ENCODE measurements at regions of chr4 and their contacts with region 1.

Region 1: GRCh38 chr4:89640620-89641366 is 196.2 kb downstream of the SNCA start:
- DNase-seq: peak; percentile 68
- ATAC-seq: peak; percentile 99
- H3K4me3 ChIP-seq: peak overlapping the region; percentile 9 to 23; a peak in 1 of 4 replicates
- H3K27ac ChIP-seq: no peak overlapping the region
- H3K4me1 ChIP-seq: peaks cover 6 to 10% of the 10 kb centered on the region in 2 experiments; a peak in 3 of 4 replicates
- H3K27me3 ChIP-seq: no peaks in the 10 kb centered on the region
- CTCF ChIP-seq: peak; percentile 49 to 85 (median 81); a peak in 5 of 6 replicates
- POLR2A ChIP-seq: no peak
- RAD21 ChIP-seq: peak; percentile 59

Region 2: GRCh38 chr4:89653012-89653411 is 12.2 kb after region 1 on chr4:
- CTCF ChIA-PET with region 1: interaction called, 14 read pairs
- POLR2A ChIA-PET with region 1: no interaction called
- RAD21 ChIA-PET with region 1: no interaction called
- intact Hi-C with region 1: no loop called
- DNase-seq: no peak
- ATAC-seq: no peak
- H3K4me3 ChIP-seq: no peak overlapping the region
- H3K27ac ChIP-seq: no peak overlapping the region
- H3K4me1 ChIP-seq: no peaks in the 10 kb centered on the region
- H3K27me3 ChIP-seq: no peaks in the 10 kb centered on the region
- CTCF ChIP-seq: no peak
- POLR2A ChIP-seq: no peak
- RAD21 ChIP-seq: no peak

Region 3: GRCh38 chr4:89657931-89658700 is 17.3 kb after region 1 on chr4:
- CTCF ChIA-PET with region 1: interaction called, 14 read pairs
- POLR2A ChIA-PET with region 1: no interaction called
- RAD21 ChIA-PET with region 1: no interaction called
- intact Hi-C with region 1: no loop called
- DNase-seq: peak; percentile 28
- ATAC-seq: peak; percentile 74
- H3K4me3 ChIP-seq: no peak overlapping the region
- H3K27ac ChIP-seq: no peak overlapping the region
- H3K4me1 ChIP-seq: peaks cover 4 to 10% of the 10 kb centered on the region in 2 experiments
- H3K27me3 ChIP-seq: no peaks in the 10 kb centered on the region
- CTCF ChIP-seq: peak; percentile 39 to 60 (median 44); a peak in 4 of 6 replicates
- POLR2A ChIP-seq: no peak
- RAD21 ChIP-seq: peak; percentile 63

Region 4: GRCh38 chr4:89868999-89869589 is 228.3 kb after region 1 on chr4:
- CTCF ChIA-PET with region 1: interaction called, 11 read pairs
- POLR2A ChIA-PET with region 1: no interaction called
- RAD21 ChIA-PET with region 1: interaction called in 1 of 2 experiments, 3 read pairs
- intact Hi-C with region 1: no loop called
- DNase-seq: no peak
- ATAC-seq: no peak
- H3K4me3 ChIP-seq: no peak overlapping the region
- H3K27ac ChIP-seq: no peak overlapping the region
- H3K4me1 ChIP-seq: no peaks in the 10 kb centered on the region
- H3K27me3 ChIP-seq: no peaks in the 10 kb centered on the region
- CTCF ChIP-seq: peak; percentile 34 to 50 (median 37); a peak in 5 of 6 replicates
- POLR2A ChIP-seq: no peak
- RAD21 ChIP-seq: peak; percentile 41; the same call in 1 of the 2 replicates

Region 5: DNA sequence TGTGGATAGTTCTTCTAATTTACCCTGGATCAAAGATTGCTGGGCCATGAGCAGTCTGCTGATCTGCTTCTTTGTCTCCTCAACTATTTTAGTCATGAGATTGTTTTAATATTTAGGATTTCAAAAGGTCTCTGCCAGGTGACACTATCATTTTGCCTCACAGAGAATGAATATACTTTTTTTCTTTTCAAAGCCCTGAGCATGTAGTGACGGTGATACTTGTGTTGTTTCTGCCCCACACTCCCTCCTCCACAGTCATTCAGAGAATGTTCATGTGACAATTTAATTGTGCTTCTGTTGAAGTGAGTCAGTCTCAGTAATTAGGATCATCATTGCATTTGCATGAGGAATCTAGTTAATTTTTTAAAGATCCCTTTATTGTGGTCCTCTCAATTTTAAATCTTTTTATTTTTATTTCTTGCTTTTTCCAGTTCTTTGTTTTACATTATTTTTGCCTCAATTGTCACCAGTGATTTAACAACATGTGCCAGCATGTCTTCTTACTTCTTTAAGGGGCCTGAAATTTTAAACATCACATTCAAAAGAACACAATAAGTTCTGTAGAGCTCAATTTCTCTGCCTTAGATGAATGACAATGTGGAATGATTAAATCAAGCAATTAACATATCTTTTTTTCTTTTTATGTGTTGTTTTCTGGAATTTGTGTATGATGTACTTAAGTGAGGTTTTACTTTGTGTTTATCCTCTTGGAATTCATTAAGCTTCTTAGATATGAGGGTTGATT is 266.2 kb after region 1 on chr4:
- CTCF ChIA-PET with region 1: interaction called, 4 read pairs
- POLR2A ChIA-PET with region 1: no interaction called
- RAD21 ChIA-PET with region 1: no interaction called
- intact Hi-C with region 1: loop called (anchors 5 kb)
- DNase-seq: no peak
- ATAC-seq: no peak
- H3K4me3 ChIP-seq: no peak overlapping the region
- H3K27ac ChIP-seq: no peak overlapping the region
- H3K4me1 ChIP-seq: no peaks in the 10 kb centered on the region
- H3K27me3 ChIP-seq: no peaks in the 10 kb centered on the region
- CTCF ChIP-seq: no peak
- POLR2A ChIP-seq: no peak
- RAD21 ChIP-seq: no peak

Region 6: DNA sequence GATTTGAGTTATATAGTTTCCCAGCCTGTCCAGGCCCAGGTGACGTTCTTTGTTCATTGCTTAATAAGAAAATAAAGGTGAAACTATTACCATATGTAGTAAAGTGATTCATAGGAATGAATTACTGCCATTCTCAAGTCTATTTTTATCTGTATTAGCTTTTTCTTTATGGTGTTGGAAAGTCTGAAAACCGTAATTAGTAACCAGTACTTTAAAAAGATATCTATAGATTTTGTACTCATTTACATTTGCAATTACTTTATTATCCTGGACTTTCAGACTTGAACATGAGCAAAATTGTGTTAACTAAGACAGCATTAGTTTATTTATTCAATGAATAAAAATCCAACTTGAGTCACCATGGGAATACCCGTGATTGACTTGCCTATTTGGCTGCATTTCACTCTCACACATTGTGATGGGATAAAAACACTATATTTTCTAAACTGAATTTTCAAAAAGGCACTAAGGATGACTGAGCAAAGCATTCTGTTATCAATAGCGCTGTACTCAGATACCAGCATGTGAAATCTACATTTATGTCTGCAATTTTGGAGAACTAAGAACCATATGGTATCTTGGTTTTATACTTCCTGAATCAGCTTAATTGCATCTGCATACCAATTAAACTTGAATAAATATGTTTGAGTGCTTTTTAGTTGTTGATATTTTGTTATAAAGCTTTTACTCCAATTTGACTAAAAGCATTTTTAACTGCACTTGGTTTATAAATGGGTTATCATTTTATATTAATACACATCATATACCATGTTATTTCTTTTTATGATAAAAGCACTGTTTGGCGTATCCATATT is 641.0 kb after region 1 on chr4:
- CTCF ChIA-PET with region 1: no interaction called
- POLR2A ChIA-PET with region 1: no interaction called
- RAD21 ChIA-PET with region 1: no interaction called
- intact Hi-C with region 1: no loop called
- DNase-seq: no peak
- ATAC-seq: no peak
- H3K4me3 ChIP-seq: no peak overlapping the region
- H3K27ac ChIP-seq: no peak overlapping the region
- H3K4me1 ChIP-seq: no peaks in the 10 kb centered on the region
- H3K27me3 ChIP-seq: no peaks in the 10 kb centered on the region
- CTCF ChIP-seq: no peak
- POLR2A ChIP-seq: no peak
- RAD21 ChIP-seq: no peak